Spleen (tissue), 13 donors: ENCODE measurements at regions of chr16 and their contacts with region 1.

Region 1: GRCh38 chr16:5234295-5235050 is 136.9 kb upstream of the EEF2KMT start:
- DNase-seq: no peak
- H3K4me3 ChIP-seq: no peak overlapping the region
- H3K27ac ChIP-seq: no peak overlapping the region
- H3K4me1 ChIP-seq: no peaks in the 10 kb centered on the region
- H3K27me3 ChIP-seq: peaks cover 0 to 51% (median 0%) of the 10 kb centered on the region in 7 donors
- CTCF ChIP-seq: no peak
- POLR2A ChIP-seq: no peak

Region 2: DNA sequence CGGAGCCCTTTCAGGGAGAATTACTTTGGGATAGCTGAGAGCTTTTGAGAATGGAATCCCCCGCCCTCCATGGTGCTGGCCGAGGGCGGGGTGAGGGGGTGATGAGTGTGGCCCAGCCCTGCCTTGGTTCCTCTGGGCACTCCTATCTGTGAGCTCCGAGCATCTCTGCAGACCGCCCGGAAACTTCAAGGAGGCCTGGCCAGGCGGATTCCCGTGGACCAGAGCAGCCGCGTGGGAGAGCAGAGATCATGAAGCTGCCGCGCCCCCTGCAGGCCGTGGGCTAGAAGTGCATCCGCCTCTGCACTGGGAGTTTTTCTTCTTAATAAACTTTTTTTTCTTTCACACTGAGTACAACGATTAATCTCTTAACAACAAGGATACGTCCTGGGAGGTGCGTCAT is 256.0 kb after region 1 on chr16:
- intact Hi-C with region 1: loop called (anchors 10 kb)
- DNase-seq: no peak
- H3K4me3 ChIP-seq: no peak overlapping the region
- H3K27ac ChIP-seq: no peak overlapping the region
- H3K4me1 ChIP-seq: no peaks in the 10 kb centered on the region
- H3K27me3 ChIP-seq: peaks cover 0 to 12% (median 0%) of the 10 kb centered on the region in 7 donors
- CTCF ChIP-seq: peak in 8 of 11 experiments; percentile 11 to 54 (median 44)
- POLR2A ChIP-seq: no peak

Region 3: GRCh38 chr16:6643080-6643686 is 1408.7 kb after region 1 on chr16:
- intact Hi-C with region 1: loop called (anchors 10 kb)
- DNase-seq: no peak
- H3K4me3 ChIP-seq: no peak overlapping the region
- H3K27ac ChIP-seq: no peak overlapping the region
- H3K4me1 ChIP-seq: peaks cover 0 to 3% (median 0%) of the 10 kb centered on the region in 6 donors
- H3K27me3 ChIP-seq: peaks cover 0 to 27% (median 0%) of the 10 kb centered on the region in 7 donors
- CTCF ChIP-seq: peak; percentile 51 to 79 (median 74)
- POLR2A ChIP-seq: no peak